Activated B cell treated with CpG ODN at 0.5 μM for 24 hours (primary cell): ENCODE measurements at regions of chr9 and their contacts with region 1.

Region 1: GRCh38 chr9:105500108-105500766 is 52.4 kb downstream of the FSD1L start:
- DNase-seq: peak; percentile 34
- ATAC-seq: peak; percentile 88
- H3K4me3 Mint-ChIP-seq: peak overlapping the region; percentile 78
- H3K27ac Mint-ChIP-seq: peak overlapping the region; percentile 96
- H3K4me1 Mint-ChIP-seq: peaks cover 26% of the 10 kb centered on the region
- H3K27me3 Mint-ChIP-seq: no peaks in the 10 kb centered on the region
- CTCF ChIP-seq: no peak

Region 2: GRCh38 chr9:105447814-105448812 is 52.1 kb before region 1 on chr9 and contains the start of gene FSD1L:
- CTCF ChIA-PET with region 1: no interaction called
- POLR2A ChIA-PET with region 1: no interaction called
- intact Hi-C with region 1: loop called (anchors 1 kb)
- DNase-seq: peak; percentile 89
- ATAC-seq: peak; percentile 92
- H3K4me3 Mint-ChIP-seq: peak within 1 kb of the TSS; percentile 90
- H3K27ac Mint-ChIP-seq: peak within 1 kb of the TSS; percentile 75
- H3K4me1 Mint-ChIP-seq: peaks cover 17% of the 10 kb centered on the region
- H3K27me3 Mint-ChIP-seq: no peaks in the 10 kb centered on the region
- CTCF ChIP-seq: no peak
- total RNA-seq, gene FSD1L: 10.2 and 12.4 TPM in 2 replicates

Region 3: DNA sequence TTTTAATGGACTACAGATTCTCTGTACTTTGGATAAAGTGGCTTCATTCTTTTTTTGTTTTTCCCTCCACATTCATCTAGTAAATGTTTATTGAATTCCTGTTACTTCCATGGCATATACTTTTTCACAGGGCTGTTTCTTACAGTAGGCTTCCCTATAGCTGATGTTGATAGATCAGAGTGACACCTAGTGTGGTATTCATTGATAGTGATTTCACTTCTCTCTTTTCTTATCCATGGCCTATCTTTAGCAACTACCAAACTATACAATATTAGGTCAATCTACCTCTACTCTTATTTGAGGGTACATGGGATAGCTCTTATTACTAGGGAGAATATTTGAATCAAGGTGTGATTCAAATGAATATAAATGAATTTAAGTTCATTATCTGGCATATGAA is 16.6 kb before region 1 on chr9:
- CTCF ChIA-PET with region 1: no interaction called
- POLR2A ChIA-PET with region 1: no interaction called
- intact Hi-C with region 1: loop called (anchors 2 kb)
- DNase-seq: no peak
- ATAC-seq: no peak
- H3K4me3 Mint-ChIP-seq: no peak overlapping the region
- H3K27ac Mint-ChIP-seq: no peak overlapping the region
- H3K4me1 Mint-ChIP-seq: peaks cover 5% of the 10 kb centered on the region
- H3K27me3 Mint-ChIP-seq: no peaks in the 10 kb centered on the region
- CTCF ChIP-seq: no peak

Region 4: GRCh38 chr9:105557771-105558610 is 57.8 kb after region 1 on chr9 and contains the start of gene FKTN:
- CTCF ChIA-PET with region 1: no interaction called
- POLR2A ChIA-PET with region 1: no interaction called
- intact Hi-C with region 1: loop called (anchors 1 kb)
- DNase-seq: peak; percentile 72
- ATAC-seq: peak; percentile 99
- H3K4me3 Mint-ChIP-seq: peak within 1 kb of the TSS; percentile 96
- H3K27ac Mint-ChIP-seq: peak within 1 kb of the TSS; percentile 83
- H3K4me1 Mint-ChIP-seq: peaks cover 20% of the 10 kb centered on the region
- H3K27me3 Mint-ChIP-seq: no peaks in the 10 kb centered on the region
- CTCF ChIP-seq: no peak
- total RNA-seq, gene FKTN: 16.8 and 17.5 TPM in 2 replicates

Region 5: DNA sequence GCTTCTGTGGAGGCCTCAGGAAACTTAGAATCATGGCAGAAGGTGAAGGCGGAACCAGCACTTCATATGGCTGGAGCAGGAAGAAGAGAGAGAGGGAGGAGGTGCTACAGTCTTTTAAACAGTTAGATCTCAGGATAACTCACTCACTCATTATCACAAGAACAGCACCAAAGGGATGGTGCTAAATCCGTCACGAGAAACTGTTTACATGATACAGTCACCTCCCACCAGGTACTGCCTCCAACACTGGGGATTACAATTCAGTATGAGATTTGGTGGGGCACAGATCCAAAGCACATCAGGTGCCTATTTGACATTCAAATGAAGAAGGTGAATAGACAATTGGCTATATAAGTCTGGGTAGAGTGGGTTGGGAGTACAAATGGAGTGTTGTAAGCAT is 92.9 kb after region 1 on chr9:
- CTCF ChIA-PET with region 1: no interaction called
- POLR2A ChIA-PET with region 1: no interaction called
- intact Hi-C with region 1: no loop called
- DNase-seq: no peak
- ATAC-seq: no peak
- H3K4me3 Mint-ChIP-seq: no peak overlapping the region
- H3K27ac Mint-ChIP-seq: no peak overlapping the region
- H3K4me1 Mint-ChIP-seq: no peaks in the 10 kb centered on the region
- H3K27me3 Mint-ChIP-seq: no peaks in the 10 kb centered on the region
- CTCF ChIP-seq: no peak